SK-MEL-5 (cell line): ENCODE measurements at regions of chr17 and their contacts with region 1.

Region 1: GRCh38 chr17:693791-694638 is 20.6 kb downstream of the VPS53 start:
- DNase-seq: no peak

Region 2: GRCh38 chr17:601244-601925 is 92.6 kb before region 1 on chr17:
- in situ Hi-C with region 1: loop called (anchors 10 kb)
- DNase-seq: peak; percentile 98

Region 3: GRCh38 chr17:614653-615473 is 79.2 kb before region 1 on chr17:
- in situ Hi-C with region 1: no loop called
- DNase-seq: peak; percentile 90

Region 4: DNA sequence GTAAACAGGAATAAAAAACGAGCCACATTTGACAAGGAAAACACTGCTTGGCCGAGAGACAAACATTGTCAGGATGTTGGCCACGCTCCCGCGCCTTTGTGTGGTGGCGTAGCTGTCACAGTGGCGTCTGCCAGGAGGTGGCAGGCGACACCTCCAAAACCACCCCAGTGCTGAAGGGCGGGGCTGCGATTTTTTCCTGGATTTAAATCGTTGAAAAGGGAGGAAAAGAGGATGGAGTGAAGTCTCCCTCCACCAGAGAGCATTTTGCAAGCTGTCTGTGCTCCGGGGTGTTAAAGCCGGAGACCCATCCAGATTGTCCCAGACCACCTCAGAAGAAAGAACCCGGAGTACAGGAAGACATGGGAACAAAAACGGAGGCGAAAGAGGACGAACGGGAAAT is 100.9 kb after region 1 on chr17:
- in situ Hi-C with region 1: no loop called
- DNase-seq: peak; percentile 62

Region 5: GRCh38 chr17:915538-916201 is 221.7 kb after region 1 on chr17:
- in situ Hi-C with region 1: no loop called
- DNase-seq: peak; percentile 3